Activated naive CD8-positive, alpha-beta T cell treated with anti-CD3 and anti-CD28 coated beads, Interleukin-2, amount 10 ng/mL, durations not matched to agents 7 days and 5 days (primary cell): ENCODE measurements at regions of chr14 and their contacts with region 1.

Region 1: DNA sequence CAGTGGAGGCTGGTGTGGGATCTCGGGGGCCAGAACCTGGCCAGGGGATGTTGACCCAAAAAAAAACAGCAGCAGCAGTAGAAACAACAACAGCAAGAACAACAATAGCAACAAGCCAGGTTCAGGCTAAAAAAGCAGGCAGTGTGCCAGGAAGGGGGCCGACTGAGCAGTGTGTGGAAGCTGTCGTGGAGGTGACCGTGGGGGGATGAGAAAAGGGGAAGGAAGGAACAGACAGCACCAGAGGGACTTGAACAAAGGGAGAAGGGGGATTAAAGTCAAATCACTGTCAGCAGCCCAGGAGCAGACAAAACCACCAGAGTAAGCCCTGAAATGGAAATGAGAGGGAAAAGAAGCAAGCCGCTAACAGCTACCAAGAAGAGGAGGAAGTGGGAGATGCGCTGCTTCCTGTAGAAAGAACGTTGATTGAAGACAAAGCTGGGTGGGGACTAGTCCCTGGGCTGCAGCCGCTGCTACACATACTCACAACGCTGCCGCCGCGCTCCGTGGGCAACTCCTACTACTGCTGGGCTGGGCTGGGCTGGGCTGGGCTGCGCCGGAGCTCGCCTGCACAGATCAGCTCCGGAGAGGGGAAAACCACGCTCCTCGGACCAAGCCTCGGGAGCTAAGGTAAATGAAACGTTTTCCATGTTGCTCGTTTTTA is at the start of gene GNG2:
- DNase-seq: peak; percentile 82
- ATAC-seq: peak; percentile 98
- H3K4me3 Mint-ChIP-seq: peak within 1 kb of the TSS; percentile 97
- H3K27ac Mint-ChIP-seq: peak within 1 kb of the TSS; percentile 88
- H3K4me1 Mint-ChIP-seq: peaks cover 48% of the 10 kb centered on the region
- H3K27me3 Mint-ChIP-seq: no peaks in the 10 kb centered on the region
- total RNA-seq, gene GNG2: 247 to 253 TPM

Region 2: DNA sequence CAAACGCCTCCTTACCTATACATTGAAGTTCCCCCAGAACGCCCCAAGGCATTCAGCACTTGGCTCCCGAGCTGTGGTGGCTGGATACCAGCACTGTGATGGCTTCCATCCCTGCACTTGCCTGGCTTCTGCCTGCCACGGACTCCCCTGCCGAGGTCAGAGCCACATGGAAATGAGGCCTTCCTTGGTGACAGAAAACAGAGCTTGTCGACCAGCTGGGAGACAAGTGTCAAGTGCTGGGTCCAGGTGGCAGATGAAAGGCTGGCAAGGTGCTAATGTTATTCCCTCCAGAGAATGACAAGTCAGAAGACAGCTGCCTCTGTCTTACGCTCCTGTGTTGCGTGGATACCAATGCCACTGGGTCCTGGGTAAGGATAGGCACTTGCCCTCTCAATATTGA is 26.1 kb before region 1 on chr14:
- POLR2A ChIA-PET with region 1: no interaction called
- DNase-seq: no peak
- ATAC-seq: no peak
- H3K4me3 Mint-ChIP-seq: no peak overlapping the region
- H3K27ac Mint-ChIP-seq: no peak overlapping the region
- H3K4me1 Mint-ChIP-seq: no peaks in the 10 kb centered on the region
- H3K27me3 Mint-ChIP-seq: peaks cover 7% of the 10 kb centered on the region

Region 3: GRCh38 chr14:51873221-51873893 is 13.1 kb after region 1 on chr14:
- POLR2A ChIA-PET with region 1: interaction called, 28 read pairs
- DNase-seq: no peak
- ATAC-seq: peak; percentile 44
- H3K4me3 Mint-ChIP-seq: peak overlapping the region; percentile 41
- H3K27ac Mint-ChIP-seq: peak overlapping the region; percentile 26
- H3K4me1 Mint-ChIP-seq: peaks cover 55% of the 10 kb centered on the region
- H3K27me3 Mint-ChIP-seq: no peaks in the 10 kb centered on the region

Region 4: GRCh38 chr14:51884086-51884927 is 24.0 kb after region 1 on chr14:
- POLR2A ChIA-PET with region 1: interaction called, 26 read pairs
- DNase-seq: no peak
- ATAC-seq: peak; percentile 64
- H3K4me3 Mint-ChIP-seq: peak overlapping the region; percentile 47
- H3K27ac Mint-ChIP-seq: peak overlapping the region; percentile 31
- H3K4me1 Mint-ChIP-seq: peaks cover 48% of the 10 kb centered on the region
- H3K27me3 Mint-ChIP-seq: no peaks in the 10 kb centered on the region

Region 5: GRCh38 chr14:51895375-51895774 is 35.1 kb after region 1 on chr14:
- POLR2A ChIA-PET with region 1: no interaction called
- DNase-seq: no peak
- ATAC-seq: no peak
- H3K4me3 Mint-ChIP-seq: no peak overlapping the region
- H3K27ac Mint-ChIP-seq: no peak overlapping the region
- H3K4me1 Mint-ChIP-seq: peaks cover 31% of the 10 kb centered on the region
- H3K27me3 Mint-ChIP-seq: no peaks in the 10 kb centered on the region